B cell (primary cell): ENCODE measurements at regions of chr15 and their contacts with region 1.

Region 1: GRCh38 chr15:41904541-41905005 is 10.7 kb upstream of the SPTBN5 start:
- DNase-seq: peak; percentile 82
- ATAC-seq: peak; percentile 92
- H3K4me3 ChIP-seq: no peak overlapping the region
- H3K4me3 Mint-ChIP-seq: no peak overlapping the region
- H3K27ac ChIP-seq: no peak overlapping the region
- H3K27ac Mint-ChIP-seq: peak overlapping the region; percentile 41
- H3K4me1 ChIP-seq: peaks cover 0 to 4% of the 10 kb centered on the region in 2 donors
- H3K4me1 Mint-ChIP-seq: peaks cover 6% of the 10 kb centered on the region
- H3K27me3 ChIP-seq: no peaks in the 10 kb centered on the region
- H3K27me3 Mint-ChIP-seq: no peaks in the 10 kb centered on the region
- CTCF ChIP-seq: peak; percentile 89

Region 2: DNA sequence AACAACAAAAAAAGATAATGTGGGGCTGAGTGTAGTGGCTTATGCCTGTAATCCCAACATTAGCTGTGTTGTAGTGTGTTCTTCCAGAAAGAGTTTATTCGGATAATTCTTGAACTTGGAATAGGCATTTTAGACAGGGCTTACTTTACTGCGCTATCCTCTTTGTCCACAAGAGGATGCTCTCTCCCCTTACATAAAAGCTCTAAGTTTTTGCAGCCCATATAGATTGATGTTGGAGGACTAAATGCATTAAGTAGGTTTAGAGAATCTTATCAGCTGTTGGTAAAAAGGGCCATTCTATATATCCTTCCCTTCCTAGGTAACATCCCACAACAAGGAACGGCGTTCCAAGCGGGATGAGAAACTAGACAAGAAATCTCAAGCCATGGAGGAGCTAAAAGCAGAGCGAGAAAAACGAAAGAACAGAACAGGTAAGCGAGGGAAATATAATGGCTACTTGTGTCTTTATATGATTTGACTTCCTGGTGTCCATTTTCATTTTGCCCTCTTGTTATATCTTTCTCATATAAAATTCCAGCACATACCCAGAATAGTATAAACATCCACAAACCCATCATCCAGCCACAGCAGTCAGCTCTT is 438.7 kb before region 1 on chr15:
- CTCF ChIA-PET with region 1: interaction called, 13 read pairs
- POLR2A ChIA-PET with region 1: no interaction called
- intact Hi-C with region 1: no loop called
- DNase-seq: peak; percentile 60
- ATAC-seq: peak; percentile 54
- H3K4me3 ChIP-seq: no peak overlapping the region
- H3K4me3 Mint-ChIP-seq: no peak overlapping the region
- H3K27ac ChIP-seq: no peak overlapping the region
- H3K27ac Mint-ChIP-seq: no peak overlapping the region
- H3K4me1 ChIP-seq: no peaks in the 10 kb centered on the region
- H3K4me1 Mint-ChIP-seq: peaks cover 5% of the 10 kb centered on the region
- H3K27me3 ChIP-seq: no peaks in the 10 kb centered on the region
- H3K27me3 Mint-ChIP-seq: no peaks in the 10 kb centered on the region
- CTCF ChIP-seq: peak; percentile 95

Region 3: GRCh38 chr15:41695750-41696426 is 208.7 kb before region 1 on chr15:
- CTCF ChIA-PET with region 1: interaction called, 4 read pairs
- POLR2A ChIA-PET with region 1: no interaction called
- intact Hi-C with region 1: loop called (anchors 1 kb)
- DNase-seq: peak; percentile 80
- ATAC-seq: peak; percentile 99
- H3K4me3 ChIP-seq: peak overlapping the region in 2 of 5 experiments; percentile 19 to 21
- H3K4me3 Mint-ChIP-seq: peak overlapping the region; percentile 35
- H3K27ac ChIP-seq: peak overlapping the region; percentile 52 to 77
- H3K27ac Mint-ChIP-seq: peak overlapping the region; percentile 51
- H3K4me1 ChIP-seq: peaks cover 12 to 28% of the 10 kb centered on the region in 2 donors
- H3K4me1 Mint-ChIP-seq: peaks cover 45% of the 10 kb centered on the region
- H3K27me3 ChIP-seq: no peaks in the 10 kb centered on the region
- H3K27me3 Mint-ChIP-seq: no peaks in the 10 kb centered on the region
- CTCF ChIP-seq: peak; percentile 66

Region 4: DNA sequence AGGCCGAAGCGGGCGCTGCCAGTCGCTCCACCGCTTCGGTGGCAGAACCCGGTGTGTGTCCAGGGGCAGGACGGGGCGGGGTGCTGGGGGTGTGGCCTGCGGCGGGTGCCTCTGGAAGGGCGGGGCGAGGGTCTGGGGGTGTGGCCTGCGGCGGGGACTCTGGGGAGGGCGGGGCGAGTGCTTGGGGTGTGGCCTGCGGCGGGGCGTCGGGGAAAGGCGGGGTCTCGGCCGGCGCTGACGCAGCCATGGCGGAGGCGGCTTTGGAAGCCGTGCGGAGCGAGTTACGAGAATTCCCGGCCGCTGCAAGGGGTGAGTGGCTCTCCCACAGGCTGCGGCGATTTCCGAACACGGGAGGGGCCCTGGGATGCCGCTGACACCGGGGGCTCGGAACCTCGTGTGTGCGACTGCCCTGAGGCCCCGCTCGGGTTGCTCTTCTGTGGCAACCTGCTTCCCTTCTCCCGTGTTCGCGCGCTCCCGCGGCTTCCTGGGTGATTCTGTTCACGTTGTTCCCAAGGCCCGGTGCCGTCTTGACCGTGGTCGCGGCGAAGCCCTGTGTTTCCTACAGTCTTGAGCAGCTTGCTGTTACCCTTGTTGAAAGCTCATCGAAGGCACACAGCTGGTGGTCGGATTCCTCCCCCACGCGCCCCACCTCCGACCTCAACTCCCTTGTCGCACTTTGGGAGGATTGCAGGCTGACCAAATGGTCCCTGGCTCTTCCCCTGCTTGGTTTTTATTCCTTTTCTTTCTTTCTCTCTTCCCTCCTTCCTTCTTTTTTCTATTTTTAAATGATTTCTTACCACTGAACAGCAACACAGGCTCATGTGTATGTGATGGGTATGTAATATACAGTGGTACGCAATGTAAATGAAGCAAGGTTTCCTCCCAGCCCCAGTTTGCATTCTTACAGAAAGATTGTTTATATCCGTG is 76.4 kb before region 1 on chr15 and contains the start of gene JMJD7:
- CTCF ChIA-PET with region 1: interaction called, 7 read pairs
- POLR2A ChIA-PET with region 1: no interaction called
- intact Hi-C with region 1: loop called (anchors 1 kb)
- DNase-seq: peak; percentile 93
- ATAC-seq: peak; percentile 99
- H3K4me3 ChIP-seq: peak within 1 kb of the TSS; percentile 54 to 95 (median 87)
- H3K4me3 Mint-ChIP-seq: peak within 1 kb of the TSS; percentile 86
- H3K27ac ChIP-seq: peak within 1 kb of the TSS; percentile 32 to 53
- H3K27ac Mint-ChIP-seq: peak within 1 kb of the TSS; percentile 63
- H3K4me1 ChIP-seq: peaks cover 16 to 28% of the 10 kb centered on the region in 2 donors
- H3K4me1 Mint-ChIP-seq: peaks cover 26% of the 10 kb centered on the region
- H3K27me3 ChIP-seq: no peaks in the 10 kb centered on the region
- H3K27me3 Mint-ChIP-seq: no peaks in the 10 kb centered on the region
- CTCF ChIP-seq: no peak
- total RNA-seq, gene JMJD7: 41.1 and 43.9 TPM in 2 replicates

Region 5: DNA sequence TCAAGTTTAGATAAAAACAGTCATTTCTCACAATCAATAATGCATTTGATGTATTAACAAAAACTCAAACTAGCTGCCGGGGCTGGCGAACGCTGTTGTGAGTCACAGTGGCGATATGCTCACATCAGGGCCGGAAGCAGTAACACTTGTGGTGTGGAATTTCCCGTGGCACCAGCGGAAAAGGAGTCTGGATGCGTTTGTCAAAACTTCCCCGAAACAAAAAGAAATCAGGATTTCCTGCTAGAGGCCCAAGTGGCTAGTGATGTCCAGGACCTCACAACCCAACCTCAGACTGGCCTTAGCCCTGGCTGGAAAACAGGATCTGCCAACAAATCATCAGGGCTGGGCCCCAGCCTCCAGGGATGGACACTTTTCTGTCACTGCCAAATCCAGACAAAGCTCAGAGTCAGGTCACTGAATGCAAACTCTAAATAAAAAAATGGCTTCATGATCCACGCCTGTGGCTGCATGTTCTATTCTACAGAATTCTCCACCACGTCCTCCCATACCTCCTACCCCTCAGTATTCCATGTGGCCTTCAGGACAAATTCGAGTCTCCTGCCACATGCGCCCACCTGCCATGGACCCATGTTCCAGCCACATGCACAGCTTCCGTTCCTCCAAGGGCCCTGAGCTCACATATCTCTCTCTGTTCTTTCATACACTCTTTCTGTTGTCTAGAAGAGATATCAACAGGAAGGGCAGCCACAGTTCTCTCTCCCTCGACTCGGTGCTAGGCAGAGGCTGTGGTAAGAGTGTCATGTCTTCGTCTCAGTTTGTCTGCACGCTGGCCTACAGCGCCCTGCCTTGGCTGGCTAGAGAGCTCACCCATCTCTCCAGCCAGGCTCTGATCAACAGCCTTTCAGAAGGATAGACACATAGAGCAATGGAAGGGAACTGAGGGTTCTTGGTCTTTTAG is 32.3 kb after region 1 on chr15:
- CTCF ChIA-PET with region 1: interaction called, 15 read pairs
- POLR2A ChIA-PET with region 1: no interaction called
- intact Hi-C with region 1: no loop called
- DNase-seq: peak; percentile 41
- ATAC-seq: peak; percentile 70
- H3K4me3 ChIP-seq: no peak overlapping the region
- H3K4me3 Mint-ChIP-seq: no peak overlapping the region
- H3K27ac ChIP-seq: peak overlapping the region; percentile 20 to 78
- H3K27ac Mint-ChIP-seq: peak overlapping the region; percentile 82
- H3K4me1 ChIP-seq: peaks cover 17 to 35% of the 10 kb centered on the region in 2 donors
- H3K4me1 Mint-ChIP-seq: peaks cover 34% of the 10 kb centered on the region
- H3K27me3 ChIP-seq: no peaks in the 10 kb centered on the region
- H3K27me3 Mint-ChIP-seq: no peaks in the 10 kb centered on the region
- CTCF ChIP-seq: no peak

Region 6: DNA sequence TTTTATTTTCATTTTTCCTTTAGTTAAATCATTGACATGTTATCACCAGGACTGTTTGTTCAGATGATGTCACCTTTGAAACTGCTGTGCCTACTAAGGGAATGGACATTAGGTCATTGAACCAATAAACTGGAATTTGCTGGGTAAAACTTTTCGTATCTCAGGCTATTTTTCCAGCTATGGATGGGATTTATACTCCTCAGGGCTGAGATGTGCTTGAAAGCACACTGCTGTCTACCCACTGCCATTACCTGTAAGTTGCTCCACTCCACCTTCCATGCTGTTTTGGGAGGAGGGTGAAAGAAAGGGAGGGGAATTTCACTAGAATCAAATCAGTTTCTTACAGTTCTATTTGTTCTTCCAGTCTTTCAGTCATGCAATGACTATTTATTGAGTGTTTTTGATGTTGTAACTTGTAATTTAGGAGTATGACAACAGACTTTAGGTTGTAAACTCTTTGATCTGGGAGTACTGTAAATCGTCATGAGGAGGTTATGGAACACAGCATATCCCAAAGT is 56.5 kb after region 1 on chr15:
- CTCF ChIA-PET with region 1: no interaction called
- POLR2A ChIA-PET with region 1: no interaction called
- intact Hi-C with region 1: no loop called
- DNase-seq: no peak
- ATAC-seq: no peak
- H3K4me3 ChIP-seq: no peak overlapping the region
- H3K4me3 Mint-ChIP-seq: no peak overlapping the region
- H3K27ac ChIP-seq: no peak overlapping the region
- H3K27ac Mint-ChIP-seq: no peak overlapping the region
- H3K4me1 ChIP-seq: peaks cover 6 to 12% of the 10 kb centered on the region in 2 donors
- H3K4me1 Mint-ChIP-seq: peaks cover 10% of the 10 kb centered on the region
- H3K27me3 ChIP-seq: no peaks in the 10 kb centered on the region
- H3K27me3 Mint-ChIP-seq: no peaks in the 10 kb centered on the region
- CTCF ChIP-seq: no peak